AG04449 (cell line): ENCODE measurements at regions of chr5 and their contacts with region 1.

Region 1: DNA sequence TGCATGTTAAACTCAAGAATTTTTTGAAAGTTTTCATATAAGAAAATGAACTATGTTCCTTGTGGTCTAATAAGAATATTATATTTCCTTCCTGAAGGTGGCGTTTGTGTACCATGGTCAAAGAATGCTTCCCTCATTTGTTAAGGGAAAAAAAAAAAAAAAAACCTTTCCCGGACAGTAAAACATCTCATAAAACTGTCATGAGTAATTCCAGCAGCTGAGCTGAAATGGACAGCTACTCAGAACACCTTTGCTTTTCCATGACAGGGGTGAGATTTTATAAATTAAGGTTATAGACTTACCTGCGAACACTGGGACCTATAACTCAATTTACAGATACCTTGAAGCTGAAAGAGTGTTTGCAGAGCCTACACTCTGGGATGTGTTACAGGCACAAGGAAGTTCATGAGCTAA is 113.2 kb upstream of the RANBP3L start:
- DNase-seq: no peak
- H3K4me3 ChIP-seq: no peak overlapping the region
- CTCF ChIP-seq: peak; percentile 20

Region 2: DNA sequence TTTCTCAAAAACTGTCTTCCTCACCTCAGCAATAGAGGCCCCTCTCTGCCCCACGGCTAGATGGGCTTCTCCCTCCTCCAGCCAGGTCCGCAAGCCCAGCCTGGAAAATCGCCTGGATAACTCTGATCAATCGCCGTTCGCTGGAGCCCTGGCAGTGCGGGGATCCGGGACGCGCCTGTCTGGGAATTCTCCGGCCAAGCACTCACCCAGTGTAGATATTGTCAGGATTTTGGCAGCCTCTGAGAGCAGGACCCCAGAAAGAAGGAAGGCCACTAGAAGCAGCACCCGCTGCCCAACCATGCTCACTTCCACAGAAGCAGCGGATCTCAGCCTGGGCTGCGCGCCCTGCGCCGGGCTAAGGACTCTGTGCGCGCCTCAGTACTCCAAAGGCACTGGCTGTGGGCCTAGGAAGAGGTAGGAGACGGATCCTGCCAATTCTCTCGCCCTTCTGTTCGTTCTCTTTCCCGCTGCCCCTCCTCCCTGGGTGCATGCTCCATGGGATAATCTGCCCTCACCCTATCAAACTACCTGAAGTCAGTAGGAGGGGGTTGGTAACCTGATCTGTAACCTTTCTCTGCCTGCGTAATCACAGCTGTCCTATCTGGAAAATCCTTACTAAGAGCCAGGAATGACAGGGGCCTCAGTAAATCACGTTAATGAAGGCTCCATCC is 423.8 kb before region 1 on chr5 and contains the start of gene UGT3A1:
- CTCF ChIA-PET with region 1: no interaction called
- POLR2A ChIA-PET with region 1: no interaction called
- DNase-seq: no peak
- H3K4me3 ChIP-seq: no peak within 1 kb of the TSS
- CTCF ChIP-seq: no peak

Region 3: DNA sequence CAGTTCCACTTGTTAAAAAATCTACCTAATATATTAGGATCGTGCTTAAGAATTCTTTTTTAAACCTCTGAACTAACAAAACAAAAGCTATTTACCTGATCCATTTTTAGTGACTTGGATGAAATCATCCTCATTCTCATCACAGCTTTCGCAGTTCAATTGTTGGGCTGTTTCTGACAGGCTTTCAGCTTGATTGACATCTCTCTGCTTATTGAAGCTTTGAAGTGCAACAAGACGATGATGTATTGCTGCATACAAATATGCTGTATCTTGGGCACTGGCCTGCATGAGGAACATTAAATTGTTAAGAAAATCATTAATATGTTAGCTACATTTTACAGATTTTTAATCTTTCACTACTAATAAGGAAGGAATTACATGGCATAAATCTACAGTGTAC is 163.7 kb before region 1 on chr5:
- CTCF ChIA-PET with region 1: no interaction called
- POLR2A ChIA-PET with region 1: no interaction called
- DNase-seq: no peak
- H3K4me3 ChIP-seq: no peak overlapping the region
- CTCF ChIP-seq: no peak

Region 4: DNA sequence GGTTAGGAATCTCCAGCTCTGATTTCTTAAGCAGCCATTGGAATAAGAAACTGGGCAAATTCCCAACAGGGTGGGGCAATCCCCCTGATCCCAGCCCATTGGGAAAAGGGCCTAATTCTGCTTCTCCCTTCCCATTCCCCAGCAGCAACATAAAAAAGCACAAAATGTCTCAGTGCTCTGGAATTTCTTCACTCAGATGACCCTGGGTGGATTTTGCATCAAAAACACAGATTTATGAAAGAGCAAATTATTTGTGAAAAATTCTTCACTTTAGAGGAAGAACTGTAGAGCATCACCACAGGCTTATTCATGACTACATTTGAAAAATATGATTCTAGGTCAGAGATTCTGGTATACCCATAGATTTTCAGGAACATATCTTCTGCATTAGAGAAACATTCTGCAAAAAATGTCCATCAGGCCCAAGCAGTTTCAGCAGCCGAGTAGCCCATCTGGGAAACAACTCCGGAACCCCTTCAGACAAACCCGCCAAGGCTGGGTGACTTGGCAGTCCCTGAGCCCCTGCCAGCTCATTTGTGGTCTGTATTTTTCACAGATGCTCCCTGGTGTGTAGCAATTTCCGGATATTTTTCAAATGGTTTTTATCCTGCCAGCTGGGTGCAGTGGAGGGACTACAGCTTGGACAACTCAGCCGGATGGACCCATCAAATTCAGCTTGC is 11.1 kb before region 1 on chr5:
- CTCF ChIA-PET with region 1: interaction called, 15 read pairs
- POLR2A ChIA-PET with region 1: no interaction called
- DNase-seq: peak; percentile 80
- H3K4me3 ChIP-seq: no peak overlapping the region
- CTCF ChIP-seq: no peak

Region 5: DNA sequence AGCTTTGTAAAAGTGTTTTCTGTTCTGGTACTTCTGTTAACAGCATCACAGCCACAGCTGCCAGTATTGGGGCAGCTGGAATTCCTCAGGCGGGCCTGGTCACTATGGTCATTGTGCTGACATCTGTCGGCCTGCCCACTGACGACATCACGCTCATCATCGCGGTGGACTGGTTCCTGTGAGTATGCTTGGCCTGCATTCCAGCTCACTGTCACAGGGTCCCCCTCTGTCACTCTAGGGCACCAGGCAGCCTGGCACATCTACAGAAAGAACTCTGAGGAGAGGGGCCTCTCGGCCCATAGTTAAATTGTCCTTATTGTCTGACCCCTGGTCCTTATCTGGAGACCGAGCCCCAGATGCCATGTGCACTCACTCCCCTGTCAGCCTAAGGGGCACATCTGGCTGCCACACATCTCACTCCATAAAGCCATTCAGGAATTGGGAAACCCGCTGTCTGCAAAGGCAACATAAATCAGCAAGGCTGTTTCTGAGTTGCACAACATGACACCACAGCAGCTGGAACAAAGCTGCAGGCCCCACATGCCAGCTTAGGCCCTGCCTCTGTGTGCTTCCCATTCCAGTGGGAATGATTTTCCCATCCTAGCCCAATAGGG is 269.1 kb after region 1 on chr5:
- CTCF ChIA-PET with region 1: interaction called, 566 read pairs
- POLR2A ChIA-PET with region 1: no interaction called
- DNase-seq: no peak
- H3K4me3 ChIP-seq: no peak overlapping the region
- CTCF ChIP-seq: no peak